A549 (cell line): ENCODE measurements at regions of chr5 and their contacts with region 1.

Region 1: GRCh38 chr5:62386824-62387223 is 16.9 kb downstream of the DIMT1 start:
- DNase-seq: no peak
- ATAC-seq: no peak
- H3K4me3 ChIP-seq: no peak overlapping the region
- H3K27ac ChIP-seq: no peak overlapping the region
- H3K4me1 ChIP-seq: no peaks in the 10 kb centered on the region
- CTCF ChIP-seq: no peak
- EP300 ChIP-seq: no peak
- POLR2A ChIP-seq: no peak
- RAD21 ChIP-seq: no peak

Region 2: GRCh38 chr5:62403434-62404250 is 16.8 kb after region 1 on chr5 and contains the start of gene DIMT1:
- CTCF ChIA-PET with region 1: no interaction called
- POLR2A ChIA-PET with region 1: interaction called, 17 read pairs
- DNase-seq: peak; percentile 95 to 96
- ATAC-seq: peak; percentile 99
- H3K4me3 ChIP-seq: peak within 1 kb of the TSS; percentile 66
- H3K27ac ChIP-seq: peak within 1 kb of the TSS; percentile 89 to 95
- H3K4me1 ChIP-seq: peaks cover 15% of the 10 kb centered on the region
- CTCF ChIP-seq: no peak
- EP300 ChIP-seq: no peak
- POLR2A ChIP-seq: peak; percentile 95
- RAD21 ChIP-seq: no peak
- polyA plus RNA-seq, gene DIMT1: 35.5 and 49.6 TPM in 2 replicates

Region 3: GRCh38 chr5:62631909-62632580 is 245.2 kb after region 1 on chr5:
- CTCF ChIA-PET with region 1: no interaction called
- POLR2A ChIA-PET with region 1: no interaction called
- DNase-seq: no peak
- ATAC-seq: no peak
- H3K4me3 ChIP-seq: no peak overlapping the region
- H3K27ac ChIP-seq: no peak overlapping the region
- H3K4me1 ChIP-seq: no peaks in the 10 kb centered on the region
- CTCF ChIP-seq: no peak
- EP300 ChIP-seq: no peak
- POLR2A ChIP-seq: no peak
- RAD21 ChIP-seq: no peak